Activated naive CD4-positive, alpha-beta T cell treated with anti-CD3 and anti-CD28 coated beads for 36 hours (primary cell): ENCODE measurements at regions of chr10 and their contacts with region 1.

Region 1: GRCh38 chr10:74262856-74263255 is 111.8 kb downstream of the ADK start:
- DNase-seq: no peak
- H3K4me3 Mint-ChIP-seq: no peak overlapping the region
- H3K27ac Mint-ChIP-seq: no peak overlapping the region
- H3K4me1 Mint-ChIP-seq: peaks cover 26% of the 10 kb centered on the region
- H3K27me3 Mint-ChIP-seq: no peaks in the 10 kb centered on the region

Region 2: GRCh38 chr10:74575191-74575720 is 312.4 kb after region 1 on chr10:
- CTCF ChIA-PET with region 1: no interaction called
- intact Hi-C with region 1: loop called (anchors 1 kb)
- DNase-seq: no peak
- H3K4me3 Mint-ChIP-seq: no peak overlapping the region
- H3K27ac Mint-ChIP-seq: no peak overlapping the region
- H3K4me1 Mint-ChIP-seq: peaks cover 16% of the 10 kb centered on the region
- H3K27me3 Mint-ChIP-seq: no peaks in the 10 kb centered on the region

Region 3: DNA sequence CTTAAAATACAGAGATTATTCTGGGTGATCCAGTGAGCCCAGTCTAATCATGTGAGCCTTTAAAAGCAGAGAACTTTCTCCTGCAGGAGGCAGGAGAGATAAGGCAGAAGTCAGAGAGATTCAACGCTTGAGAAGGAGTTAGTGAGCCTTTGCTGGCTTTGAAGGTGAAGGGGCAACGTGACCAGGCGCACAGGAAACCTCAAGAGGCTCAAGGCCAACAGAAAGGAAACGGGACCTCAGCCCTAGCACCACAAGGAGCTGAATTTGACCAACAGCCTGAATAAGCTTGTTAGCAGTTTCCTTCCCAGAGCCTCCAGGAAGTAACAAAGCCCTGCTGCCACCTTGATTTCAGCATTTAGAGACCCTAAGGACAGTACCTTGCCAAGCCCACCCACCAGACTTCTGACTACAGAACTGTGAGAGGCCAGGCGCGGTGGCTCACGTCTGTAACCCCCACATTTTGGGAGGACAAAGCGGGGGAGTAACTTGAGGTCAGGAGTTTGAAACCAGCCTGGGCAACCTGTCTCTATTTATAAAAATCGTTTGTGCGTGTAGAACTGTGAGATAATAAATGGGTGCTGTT is 476.2 kb after region 1 on chr10:
- CTCF ChIA-PET with region 1: no interaction called
- intact Hi-C with region 1: loop called (anchors 2 kb)
- DNase-seq: peak; percentile 46
- H3K4me3 Mint-ChIP-seq: no peak overlapping the region
- H3K27ac Mint-ChIP-seq: no peak overlapping the region
- H3K4me1 Mint-ChIP-seq: peaks cover 13% of the 10 kb centered on the region
- H3K27me3 Mint-ChIP-seq: no peaks in the 10 kb centered on the region